K562 (cell line): ENCODE measurements at regions of chr4 and their contacts with region 1.

Region 1: GRCh38 chr4:73019462-73020047 is 50.0 kb downstream of the COX18 start:
- DNase-seq: peak; percentile 22 to 64 (median 32)
- ATAC-seq: peak; percentile 67
- H3K4me3 ChIP-seq: no peak overlapping the region
- H3K27ac ChIP-seq: no peak overlapping the region
- H3K4me1 ChIP-seq: no peaks in the 10 kb centered on the region
- H3K27me3 ChIP-seq: peaks cover 0 to 10% of the 10 kb centered on the region in 2 experiments; a peak in 1 of 5 replicates
- CTCF ChIP-seq: peak; percentile 53 to 80 (median 55); a peak in 5 of 6 replicates
- EP300 ChIP-seq: no peak
- POLR2A ChIP-seq: no peak
- RAD21 ChIP-seq: peak; percentile 86 to 87

Region 2: DNA sequence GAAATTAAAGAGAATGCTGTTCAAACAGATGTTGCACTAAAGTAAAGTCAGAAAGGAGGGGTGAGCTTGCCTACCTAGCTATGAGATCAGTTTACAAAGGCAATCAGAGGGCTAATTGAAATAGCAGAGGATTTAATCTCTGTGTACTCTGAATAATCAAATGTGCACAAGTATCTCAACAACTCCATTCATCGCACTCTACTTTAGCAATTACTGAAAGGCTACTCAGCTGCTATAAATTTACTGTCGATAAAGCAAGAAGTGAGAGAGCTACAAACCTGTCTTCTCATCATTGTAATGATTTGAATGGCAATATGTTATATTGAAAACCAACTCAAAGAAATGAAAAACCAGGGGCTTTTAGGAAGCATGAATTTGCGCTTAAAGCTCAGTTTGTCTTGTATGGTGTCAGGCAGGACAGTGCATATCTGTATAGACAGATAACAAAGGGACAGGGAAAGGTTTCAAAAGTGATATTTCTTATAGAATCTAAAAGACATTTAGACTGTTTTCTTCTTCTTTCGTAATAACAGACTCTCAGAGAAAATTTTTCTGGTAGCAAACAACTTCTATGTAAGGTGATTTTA is 1270.5 kb before region 1 on chr4:
- CTCF ChIA-PET with region 1: no interaction called
- POLR2A ChIA-PET with region 1: no interaction called
- in situ Hi-C with region 1: loop called (anchors 25 kb)
- intact Hi-C with region 1: loop called (anchors 10 kb)
- DNase-seq: no peak
- ATAC-seq: no peak
- H3K4me3 ChIP-seq: no peak overlapping the region
- H3K27ac ChIP-seq: no peak overlapping the region
- H3K4me1 ChIP-seq: no peaks in the 10 kb centered on the region
- H3K27me3 ChIP-seq: no peaks in the 10 kb centered on the region
- CTCF ChIP-seq: no peak
- EP300 ChIP-seq: no peak
- POLR2A ChIP-seq: no peak
- RAD21 ChIP-seq: no peak

Region 3: DNA sequence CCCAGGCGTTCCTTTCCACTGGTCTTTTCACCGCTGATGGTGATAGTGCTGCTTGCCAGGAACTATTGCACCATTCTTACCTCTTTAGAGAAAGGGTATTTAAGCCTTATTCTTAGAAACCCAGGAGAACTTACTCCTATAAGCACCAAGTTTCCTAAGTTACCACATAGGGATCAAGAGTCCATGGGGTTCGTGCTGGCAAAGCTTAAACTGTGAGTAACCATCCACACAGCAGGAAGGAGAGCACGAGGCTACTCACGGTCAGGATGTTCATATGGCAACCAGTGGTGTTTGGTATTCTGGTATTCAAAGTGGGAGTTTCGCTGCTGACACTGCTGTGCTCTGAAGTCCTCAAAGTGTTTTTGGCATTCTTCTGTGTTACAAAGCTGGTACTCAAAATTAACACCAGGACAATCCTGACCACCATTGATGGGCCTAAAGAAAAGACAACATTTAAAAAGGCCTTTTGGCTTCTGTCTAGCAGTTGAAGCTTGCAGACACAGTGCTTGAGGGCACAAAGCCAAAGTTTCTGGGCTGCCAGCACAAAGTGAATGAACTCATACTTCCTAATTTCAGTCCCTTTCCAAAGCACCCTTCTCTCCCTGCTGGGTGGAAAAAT is 707.4 kb before region 1 on chr4:
- CTCF ChIA-PET with region 1: no interaction called
- POLR2A ChIA-PET with region 1: no interaction called
- in situ Hi-C with region 1: loop called (anchors 10 kb)
- intact Hi-C with region 1: no loop called
- DNase-seq: no peak
- ATAC-seq: no peak
- H3K4me3 ChIP-seq: no peak overlapping the region
- H3K27ac ChIP-seq: no peak overlapping the region
- H3K4me1 ChIP-seq: no peaks in the 10 kb centered on the region
- H3K27me3 ChIP-seq: no peaks in the 10 kb centered on the region
- CTCF ChIP-seq: no peak
- EP300 ChIP-seq: no peak
- POLR2A ChIP-seq: no peak
- RAD21 ChIP-seq: no peak

Region 4: DNA sequence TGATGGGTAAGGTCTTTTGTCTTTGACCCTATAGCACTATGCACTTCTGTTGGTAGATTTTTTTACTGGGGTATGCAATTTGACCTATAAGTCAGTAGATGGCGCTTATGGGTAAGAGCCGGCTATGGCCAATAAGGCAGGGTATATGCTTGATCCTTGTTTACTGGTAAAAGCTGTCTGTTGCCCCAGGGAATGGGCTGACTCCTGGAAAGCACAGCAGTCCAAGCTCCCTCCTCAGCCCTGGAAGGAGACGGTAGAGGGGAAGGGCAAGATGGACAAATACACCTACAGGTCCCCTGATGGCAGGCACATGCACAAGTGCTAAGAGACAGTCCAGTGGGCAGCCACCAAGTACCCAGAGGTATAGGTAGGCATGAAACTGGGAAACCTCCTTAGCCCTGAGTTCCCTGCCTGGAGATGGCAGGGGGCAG is 514.2 kb before region 1 on chr4:
- CTCF ChIA-PET with region 1: interaction called, 7 read pairs
- POLR2A ChIA-PET with region 1: no interaction called
- in situ Hi-C with region 1: no loop called
- intact Hi-C with region 1: loop called (anchors 5 kb)
- DNase-seq: peak; percentile 22 to 57 (median 38)
- ATAC-seq: peak; percentile 96
- H3K4me3 ChIP-seq: no peak overlapping the region
- H3K27ac ChIP-seq: no peak overlapping the region
- H3K4me1 ChIP-seq: no peaks in the 10 kb centered on the region
- H3K27me3 ChIP-seq: no peaks in the 10 kb centered on the region
- CTCF ChIP-seq: peak; percentile 63 to 75 (median 68)
- EP300 ChIP-seq: no peak
- POLR2A ChIP-seq: no peak
- RAD21 ChIP-seq: peak; percentile 66 to 86

Region 5: DNA sequence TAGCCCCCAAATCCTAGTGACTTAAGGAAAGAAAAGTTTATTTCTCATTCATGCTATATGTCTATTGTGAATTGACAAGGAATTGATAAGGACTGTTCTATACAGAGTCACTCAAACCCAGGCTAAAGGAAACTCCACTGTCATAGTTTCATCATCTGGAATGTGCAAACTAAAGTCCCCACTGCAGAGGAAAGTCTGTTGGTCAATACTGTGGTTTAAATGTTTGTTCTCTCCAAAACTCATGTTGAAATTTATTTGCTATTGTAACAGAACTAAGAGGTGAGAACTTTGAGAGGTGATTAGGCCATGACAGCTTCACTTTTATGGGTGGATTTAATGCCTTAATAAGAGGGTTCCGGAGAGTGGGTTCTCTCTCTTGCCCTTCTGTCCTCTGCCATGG is 99.6 kb before region 1 on chr4:
- CTCF ChIA-PET with region 1: no interaction called
- POLR2A ChIA-PET with region 1: no interaction called
- in situ Hi-C with region 1: no loop called
- intact Hi-C with region 1: no loop called
- DNase-seq: no peak
- ATAC-seq: no peak
- H3K4me3 ChIP-seq: no peak overlapping the region
- H3K27ac ChIP-seq: no peak overlapping the region
- H3K4me1 ChIP-seq: no peaks in the 10 kb centered on the region
- H3K27me3 ChIP-seq: no peaks in the 10 kb centered on the region
- CTCF ChIP-seq: no peak
- EP300 ChIP-seq: no peak
- POLR2A ChIP-seq: no peak
- RAD21 ChIP-seq: no peak

Region 6: DNA sequence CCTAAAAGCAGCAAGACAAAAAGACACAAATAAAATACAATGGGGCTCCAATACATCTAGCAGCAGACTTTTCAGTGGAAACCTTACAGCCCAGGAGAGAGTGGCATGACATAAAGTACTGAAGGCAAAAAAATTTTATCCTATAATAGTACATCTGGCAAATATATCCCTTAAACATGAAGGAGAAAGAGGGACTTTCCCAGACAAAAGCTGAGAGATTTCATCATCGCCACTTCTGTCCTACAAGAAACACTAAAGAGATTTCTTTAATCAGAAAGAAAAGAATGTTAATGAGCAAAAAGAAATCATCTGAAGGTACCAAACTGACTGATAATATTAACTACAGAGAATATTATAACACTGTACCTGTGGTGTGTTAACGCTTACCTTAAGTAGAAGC is 152.6 kb after region 1 on chr4:
- CTCF ChIA-PET with region 1: no interaction called
- POLR2A ChIA-PET with region 1: no interaction called
- in situ Hi-C with region 1: no loop called
- intact Hi-C with region 1: no loop called
- DNase-seq: no peak
- ATAC-seq: no peak
- H3K4me3 ChIP-seq: no peak overlapping the region
- H3K27ac ChIP-seq: no peak overlapping the region
- H3K4me1 ChIP-seq: no peaks in the 10 kb centered on the region
- H3K27me3 ChIP-seq: no peaks in the 10 kb centered on the region
- CTCF ChIP-seq: no peak
- EP300 ChIP-seq: no peak
- POLR2A ChIP-seq: no peak
- RAD21 ChIP-seq: no peak

Region 7: DNA sequence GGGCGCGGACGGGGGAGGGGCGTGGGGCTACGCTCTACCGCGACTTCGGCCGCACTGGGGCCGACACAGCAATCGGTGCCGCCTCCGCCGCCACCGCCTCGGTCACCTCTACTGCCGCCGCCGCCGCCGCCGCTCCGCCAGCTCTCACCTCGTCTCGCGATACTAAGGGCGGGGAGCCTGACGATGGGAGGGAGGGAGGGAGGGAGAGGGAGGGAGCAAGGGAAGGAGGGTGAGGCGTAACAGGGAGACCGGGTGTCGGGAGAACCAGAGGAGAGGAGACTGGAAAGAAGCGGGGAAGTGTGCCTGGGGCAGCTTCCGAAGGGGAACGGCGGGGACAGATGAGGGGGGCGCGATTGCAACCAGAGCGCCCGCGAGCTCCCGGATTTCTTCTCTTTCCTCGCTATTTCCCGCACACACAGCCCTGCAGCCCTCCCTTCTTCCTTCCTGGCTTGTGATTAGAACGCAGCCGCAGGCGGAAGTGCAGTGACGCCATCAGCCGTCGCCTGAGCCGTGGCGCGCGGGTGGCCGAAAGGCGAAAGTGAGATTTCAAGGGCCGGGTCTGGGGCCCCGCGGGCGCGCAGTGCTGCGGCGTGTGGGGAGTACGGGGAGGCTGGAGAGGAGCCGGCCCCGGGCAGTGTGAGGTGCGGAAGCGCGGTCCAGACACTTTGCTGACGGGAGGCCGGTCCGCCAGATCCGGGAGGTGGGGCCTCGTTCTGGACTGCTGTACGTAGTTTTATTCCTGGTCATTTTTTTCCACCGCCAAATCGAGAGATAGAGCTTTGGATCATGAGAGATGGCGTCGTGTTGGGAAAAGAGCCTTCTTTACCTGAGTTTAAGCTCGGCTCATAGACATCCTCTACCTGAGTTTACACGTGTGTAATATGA is 239.4 kb after region 1 on chr4 and contains the start of gene ANKRD17:
- CTCF ChIA-PET with region 1: no interaction called
- POLR2A ChIA-PET with region 1: no interaction called
- in situ Hi-C with region 1: no loop called
- intact Hi-C with region 1: loop called (anchors 10 kb)
- DNase-seq: peak; percentile 76 to 94 (median 84)
- ATAC-seq: peak; percentile 82
- H3K4me3 ChIP-seq: peak within 1 kb of the TSS; percentile 97
- H3K27ac ChIP-seq: peak within 1 kb of the TSS; percentile 97
- H3K4me1 ChIP-seq: no peaks in the 10 kb centered on the region
- H3K27me3 ChIP-seq: no peaks in the 10 kb centered on the region
- CTCF ChIP-seq: peak in 1 of 3 experiments; percentile 21; a peak in 1 of 6 replicates
- EP300 ChIP-seq: peak; percentile 56; the same call in 1 of the 2 replicates
- POLR2A ChIP-seq: peak; percentile 98
- RAD21 ChIP-seq: no peak
- polyA plus RNA-seq, gene ANKRD17: 25.5 to 26.9 TPM